GM12878 (cell line): ENCODE measurements at regions of chr10 and their contacts with region 1.

Region 1: DNA sequence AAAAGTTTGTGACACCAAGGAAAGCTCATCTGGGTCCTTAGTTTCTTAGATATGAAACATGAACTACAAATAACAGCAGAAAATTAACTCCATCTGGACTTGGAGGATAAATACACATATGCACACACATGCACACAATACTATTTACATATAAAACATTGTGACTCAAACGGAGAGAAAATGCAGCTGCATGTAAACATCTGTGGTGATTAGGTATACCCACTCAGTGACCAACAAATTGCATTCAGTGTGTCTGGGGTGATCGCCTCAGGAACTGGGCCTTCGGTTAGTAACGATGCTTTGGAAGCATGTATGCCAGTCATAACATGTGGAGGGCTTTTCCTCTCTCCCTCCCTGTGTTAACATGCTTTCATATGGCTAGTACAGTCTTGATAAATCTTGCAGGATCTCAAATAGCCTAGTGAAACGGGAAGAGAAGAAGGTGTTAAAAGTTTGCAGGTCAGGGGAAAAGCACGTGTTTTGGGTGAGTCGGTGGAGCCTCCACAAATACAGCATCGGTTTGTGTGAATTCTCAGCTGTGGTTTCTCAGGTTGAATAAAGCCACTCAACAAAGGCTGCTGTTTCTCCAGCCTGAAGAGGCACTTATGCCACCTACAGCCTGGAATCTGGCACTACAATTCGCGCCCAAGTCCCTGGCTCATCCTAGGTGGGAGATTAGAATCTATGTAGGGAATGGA is 8.7 kb upstream of the GLRX3 start:
- DNase-seq: peak; percentile 44
- ATAC-seq: peak; percentile 98
- H3K4me3 ChIP-seq: no peak overlapping the region
- H3K27ac ChIP-seq: no peak overlapping the region
- H3K4me1 ChIP-seq: no peaks in the 10 kb centered on the region
- H3K27me3 ChIP-seq: no peaks in the 10 kb centered on the region
- CTCF ChIP-seq: peak; percentile 79 to 91 (median 85); a peak in 5 of 6 replicates
- EP300 ChIP-seq: no peak
- POLR2A ChIP-seq: no peak
- RAD21 ChIP-seq: peak; percentile 92

Region 2: GRCh38 chr10:128211953-128212727 is 1915.4 kb before region 1 on chr10:
- CTCF ChIA-PET with region 1: interaction called, 3 read pairs
- POLR2A ChIA-PET with region 1: no interaction called
- RAD21 ChIA-PET with region 1: no interaction called
- SMC1A ChIA-PET with region 1: no interaction called
- in situ Hi-C with region 1: no loop called
- intact Hi-C with region 1: loop called (anchors 5 kb)
- DNase-seq: peak; percentile 15
- ATAC-seq: peak; percentile 99
- H3K4me3 ChIP-seq: no peak overlapping the region
- H3K27ac ChIP-seq: no peak overlapping the region
- H3K4me1 ChIP-seq: no peaks in the 10 kb centered on the region
- H3K27me3 ChIP-seq: peaks cover 0 to 4% of the 10 kb centered on the region in 2 experiments; a peak in 3 of 4 replicates
- CTCF ChIP-seq: peak; percentile 92 to 96 (median 95)
- EP300 ChIP-seq: no peak
- POLR2A ChIP-seq: no peak
- RAD21 ChIP-seq: 0 out of 2 replicates have a peak, but pooled peaks have one; percentile 26

Region 3: GRCh38 chr10:129030996-129031843 is 1096.3 kb before region 1 on chr10:
- CTCF ChIA-PET with region 1: interaction called, 5 read pairs
- POLR2A ChIA-PET with region 1: no interaction called
- RAD21 ChIA-PET with region 1: no interaction called
- SMC1A ChIA-PET with region 1: interaction called, 3 read pairs
- in situ Hi-C with region 1: loop called (anchors 25 kb)
- intact Hi-C with region 1: loop called (anchors 1 kb)
- DNase-seq: no peak
- ATAC-seq: peak; percentile 89
- H3K4me3 ChIP-seq: no peak overlapping the region
- H3K27ac ChIP-seq: no peak overlapping the region
- H3K4me1 ChIP-seq: no peaks in the 10 kb centered on the region
- H3K27me3 ChIP-seq: no peaks in the 10 kb centered on the region; a peak in 1 of 4 replicates
- CTCF ChIP-seq: peak; percentile 73 to 84 (median 82)
- EP300 ChIP-seq: no peak
- POLR2A ChIP-seq: no peak
- RAD21 ChIP-seq: peak; percentile 78

Region 4: DNA sequence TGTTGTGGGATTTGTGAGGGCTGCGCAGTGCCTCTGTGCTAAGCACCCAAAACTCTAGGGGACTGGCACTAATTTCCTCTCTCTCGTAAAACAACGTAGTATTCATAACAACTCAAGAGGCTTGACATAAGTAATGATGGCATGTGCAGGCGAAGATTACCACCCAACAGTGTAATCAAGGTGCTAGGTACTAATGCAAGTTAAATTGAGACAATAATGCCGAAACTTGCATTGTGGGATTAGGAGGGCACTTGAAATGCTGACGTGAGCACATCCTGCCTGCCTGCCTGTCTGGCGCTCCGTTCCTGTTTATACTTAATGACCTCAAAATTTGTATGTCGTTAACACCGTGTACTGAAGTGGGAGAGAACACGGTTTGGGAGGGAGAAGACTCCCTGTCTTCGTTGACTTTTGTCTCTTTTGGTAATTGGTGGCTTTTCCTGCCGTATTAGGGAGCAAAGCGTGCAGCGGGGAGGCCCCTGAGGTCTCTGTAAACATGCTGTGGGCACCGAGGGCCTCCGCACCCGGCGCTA is 521.5 kb before region 1 on chr10:
- CTCF ChIA-PET with region 1: no interaction called
- POLR2A ChIA-PET with region 1: no interaction called
- RAD21 ChIA-PET with region 1: no interaction called
- SMC1A ChIA-PET with region 1: no interaction called
- in situ Hi-C with region 1: no loop called
- intact Hi-C with region 1: loop called (anchors 5 kb)
- DNase-seq: peak; percentile 72
- ATAC-seq: peak; percentile 62
- H3K4me3 ChIP-seq: peak overlapping the region; percentile 38; the same call in 1 of the 2 replicates
- H3K27ac ChIP-seq: peak overlapping the region; percentile 51
- H3K4me1 ChIP-seq: peaks cover 36% of the 10 kb centered on the region
- H3K27me3 ChIP-seq: no peaks in the 10 kb centered on the region
- CTCF ChIP-seq: no peak
- EP300 ChIP-seq: peak; percentile 70 to 81; a peak in 3 of 4 replicates
- POLR2A ChIP-seq: no peak
- RAD21 ChIP-seq: no peak

Region 5: GRCh38 chr10:129877773-129878371 is 249.6 kb before region 1 on chr10:
- CTCF ChIA-PET with region 1: interaction called, 12 read pairs
- POLR2A ChIA-PET with region 1: no interaction called
- RAD21 ChIA-PET with region 1: no interaction called
- SMC1A ChIA-PET with region 1: no interaction called
- in situ Hi-C with region 1: no loop called
- intact Hi-C with region 1: no loop called
- DNase-seq: no peak
- ATAC-seq: peak; percentile 67; the same call in 2 of the 3 replicates
- H3K4me3 ChIP-seq: no peak overlapping the region
- H3K27ac ChIP-seq: no peak overlapping the region
- H3K4me1 ChIP-seq: no peaks in the 10 kb centered on the region
- H3K27me3 ChIP-seq: no peaks in the 10 kb centered on the region
- CTCF ChIP-seq: peak; percentile 43 to 70 (median 62)
- EP300 ChIP-seq: no peak
- POLR2A ChIP-seq: no peak
- RAD21 ChIP-seq: no peak

Region 6: DNA sequence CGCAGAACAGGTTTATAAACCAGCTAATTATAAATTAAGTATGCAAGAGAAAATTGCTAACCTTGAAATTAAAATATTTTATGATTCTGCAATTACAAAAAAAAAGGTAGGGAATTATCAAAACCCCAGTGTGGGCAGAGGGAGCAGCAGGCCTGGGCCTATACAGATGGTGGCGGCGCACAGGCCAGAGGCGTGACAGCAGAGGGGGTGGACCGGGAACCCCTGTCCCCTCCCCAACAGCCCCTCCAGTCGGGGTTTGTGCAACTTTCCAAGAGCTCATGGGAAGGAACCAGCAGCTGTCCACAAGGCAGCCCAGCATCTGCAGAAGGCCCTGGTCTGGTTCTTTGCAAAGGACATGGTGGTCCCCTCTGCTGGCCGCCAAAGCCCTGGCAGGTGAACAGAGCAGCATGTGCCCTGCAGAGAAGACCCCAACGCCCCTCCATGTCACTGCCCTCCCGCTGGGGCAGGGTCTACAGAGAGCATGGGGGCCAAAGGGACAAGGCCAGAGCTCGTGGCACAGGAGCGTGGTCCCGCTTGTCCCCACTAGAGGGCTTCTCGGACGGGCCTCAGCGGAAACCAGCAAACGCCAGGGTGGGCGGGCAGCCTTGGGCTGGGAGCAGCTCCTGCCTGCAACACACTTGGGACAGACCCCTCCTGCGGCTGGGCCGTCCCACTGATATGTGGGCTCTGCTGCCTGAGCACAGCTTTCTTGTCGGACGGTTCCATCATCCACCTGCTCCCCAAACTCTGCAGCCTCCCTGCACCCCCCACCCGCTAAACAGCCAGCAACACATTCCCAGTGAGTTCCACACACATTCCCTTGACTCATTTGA is 238.5 kb before region 1 on chr10:
- CTCF ChIA-PET with region 1: interaction called, 10 read pairs
- POLR2A ChIA-PET with region 1: no interaction called
- RAD21 ChIA-PET with region 1: interaction called, 3 read pairs
- SMC1A ChIA-PET with region 1: no interaction called
- in situ Hi-C with region 1: no loop called
- intact Hi-C with region 1: loop called (anchors 5 kb)
- DNase-seq: no peak
- ATAC-seq: peak; percentile 80
- H3K4me3 ChIP-seq: no peak overlapping the region
- H3K27ac ChIP-seq: no peak overlapping the region
- H3K4me1 ChIP-seq: no peaks in the 10 kb centered on the region
- H3K27me3 ChIP-seq: no peaks in the 10 kb centered on the region
- CTCF ChIP-seq: peak; percentile 46 to 72 (median 58)
- EP300 ChIP-seq: no peak
- POLR2A ChIP-seq: no peak
- RAD21 ChIP-seq: peak; percentile 38

Region 7: DNA sequence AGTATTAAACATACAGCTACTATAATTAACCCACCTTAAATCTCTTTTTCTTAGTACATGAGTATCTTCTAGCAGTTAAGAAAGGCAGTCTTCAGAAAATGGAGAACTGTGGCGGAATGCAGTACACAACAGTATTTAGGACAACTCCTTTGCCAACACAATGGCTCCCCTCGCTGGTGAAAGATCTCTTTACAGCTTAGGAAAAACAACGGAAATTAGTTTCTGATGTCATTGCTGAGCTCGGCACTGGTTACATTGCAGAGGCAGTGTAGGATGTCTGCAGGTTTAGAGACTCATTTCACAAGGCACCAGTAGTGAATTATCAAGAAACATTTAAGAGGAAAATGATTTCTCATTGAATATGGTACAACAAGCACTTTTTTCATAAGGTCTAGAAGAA is 52.1 kb after region 1 on chr10:
- CTCF ChIA-PET with region 1: no interaction called
- POLR2A ChIA-PET with region 1: no interaction called
- RAD21 ChIA-PET with region 1: no interaction called
- SMC1A ChIA-PET with region 1: no interaction called
- in situ Hi-C with region 1: no loop called
- intact Hi-C with region 1: no loop called
- DNase-seq: no peak
- ATAC-seq: no peak
- H3K4me3 ChIP-seq: no peak overlapping the region
- H3K27ac ChIP-seq: no peak overlapping the region
- H3K4me1 ChIP-seq: no peaks in the 10 kb centered on the region
- H3K27me3 ChIP-seq: no peaks in the 10 kb centered on the region
- CTCF ChIP-seq: peak in 2 of 3 experiments; percentile 5 to 33; a peak in 2 of 6 replicates
- EP300 ChIP-seq: no peak
- POLR2A ChIP-seq: no peak
- RAD21 ChIP-seq: peak; percentile 53